T-cell (primary cell): ENCODE measurements at regions of chr12 and their contacts with region 1.

Region 1: DNA sequence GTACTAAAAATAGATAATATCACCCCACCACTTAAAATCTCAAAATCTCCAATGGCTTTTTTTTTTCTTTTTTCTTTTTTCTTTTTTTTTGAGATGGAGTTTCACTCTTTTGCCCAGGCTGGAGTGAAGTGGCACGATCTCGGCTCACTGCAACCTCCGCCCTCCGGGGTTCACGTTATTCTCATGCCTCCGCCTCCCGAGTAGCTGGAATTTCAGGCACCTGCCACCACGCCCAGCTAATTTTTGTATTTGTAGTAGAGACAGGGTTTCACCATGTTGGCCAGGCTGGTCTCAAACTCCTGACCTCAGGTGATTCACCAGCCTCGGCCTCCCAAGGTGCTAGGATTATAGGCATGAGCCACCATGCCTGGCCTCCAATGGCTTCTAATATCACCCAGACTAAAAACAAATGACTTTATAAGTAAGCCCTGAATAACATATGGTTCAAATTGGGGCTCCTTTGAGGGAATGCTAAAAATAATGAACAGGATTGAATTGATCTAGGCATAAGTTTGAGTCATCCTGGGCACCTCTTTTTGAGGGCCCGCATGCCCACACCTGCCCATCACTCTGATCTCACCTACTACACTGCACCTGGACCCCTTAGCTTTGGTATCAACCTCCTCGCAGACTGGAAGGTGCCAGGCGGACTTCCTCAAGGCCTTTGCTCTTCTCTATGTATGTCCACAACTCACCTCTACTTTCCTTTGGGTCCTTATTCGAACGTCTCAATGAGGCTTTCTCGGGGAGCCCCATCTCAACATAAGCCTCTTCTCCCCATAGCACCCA is 17.4 kb downstream of the NTN4 start:
- DNase-seq: no peak
- ATAC-seq: no peak
- H3K4me3 ChIP-seq: no peak overlapping the region
- H3K4me3 Mint-ChIP-seq: no peak overlapping the region
- H3K27ac ChIP-seq: no peak overlapping the region
- H3K27ac Mint-ChIP-seq: no peak overlapping the region
- H3K4me1 ChIP-seq: no peaks in the 10 kb centered on the region
- H3K4me1 Mint-ChIP-seq: no peaks in the 10 kb centered on the region
- H3K27me3 ChIP-seq: peaks cover 0 to 10% of the 10 kb centered on the region in 2 experiments
- H3K27me3 Mint-ChIP-seq: peaks cover 31 to 43% of the 10 kb centered on the region in 2 donors

Region 2: DNA sequence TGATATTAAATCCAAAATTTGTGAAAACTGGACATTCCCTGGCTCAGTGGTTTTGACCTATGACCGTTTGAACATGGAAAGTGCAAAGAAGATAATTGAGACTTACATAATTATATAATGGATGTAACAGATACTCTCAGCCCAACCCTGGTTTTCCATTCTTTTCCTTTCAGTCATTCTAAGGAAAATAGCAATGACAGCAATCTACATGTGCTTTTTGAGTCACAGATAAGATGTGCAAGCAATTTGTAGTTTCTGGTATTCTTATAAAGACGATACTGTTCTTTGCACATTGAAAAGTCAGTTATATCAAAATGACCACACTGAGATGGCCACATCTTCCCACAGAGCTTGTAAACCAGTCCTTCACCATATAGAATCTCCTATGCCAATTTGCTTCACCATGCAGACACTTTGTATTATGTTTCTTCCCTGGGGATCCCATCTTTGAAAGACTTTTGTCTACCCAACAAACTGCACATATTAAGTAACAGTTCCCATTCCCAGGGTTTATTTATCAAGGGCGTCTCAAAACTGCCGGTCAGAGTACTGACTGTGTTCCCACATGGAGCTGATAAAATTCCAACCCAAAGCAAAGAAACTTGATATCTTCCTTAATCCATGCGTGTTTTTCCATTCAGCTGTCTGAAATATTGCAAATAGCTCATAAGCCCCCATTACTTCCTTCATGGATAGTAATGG is 1590.0 kb before region 1 on chr12:
- CTCF ChIA-PET with region 1: no interaction called
- POLR2A ChIA-PET with region 1: interaction called in 1 of 2 experiments, 11 read pairs
- DNase-seq: no peak
- ATAC-seq: no peak
- H3K4me3 ChIP-seq: no peak overlapping the region
- H3K4me3 Mint-ChIP-seq: no peak overlapping the region
- H3K27ac ChIP-seq: no peak overlapping the region
- H3K27ac Mint-ChIP-seq: no peak overlapping the region
- H3K4me1 ChIP-seq: peaks cover 4 to 11% of the 10 kb centered on the region in 2 experiments
- H3K4me1 Mint-ChIP-seq: peaks cover 5 to 10% (median 9%) of the 10 kb centered on the region in 3 donors
- H3K27me3 ChIP-seq: no peaks in the 10 kb centered on the region
- H3K27me3 Mint-ChIP-seq: no peaks in the 10 kb centered on the region